WTC11 (cell line): ENCODE measurements at regions of chr9 and their contacts with region 1.

Region 1: DNA sequence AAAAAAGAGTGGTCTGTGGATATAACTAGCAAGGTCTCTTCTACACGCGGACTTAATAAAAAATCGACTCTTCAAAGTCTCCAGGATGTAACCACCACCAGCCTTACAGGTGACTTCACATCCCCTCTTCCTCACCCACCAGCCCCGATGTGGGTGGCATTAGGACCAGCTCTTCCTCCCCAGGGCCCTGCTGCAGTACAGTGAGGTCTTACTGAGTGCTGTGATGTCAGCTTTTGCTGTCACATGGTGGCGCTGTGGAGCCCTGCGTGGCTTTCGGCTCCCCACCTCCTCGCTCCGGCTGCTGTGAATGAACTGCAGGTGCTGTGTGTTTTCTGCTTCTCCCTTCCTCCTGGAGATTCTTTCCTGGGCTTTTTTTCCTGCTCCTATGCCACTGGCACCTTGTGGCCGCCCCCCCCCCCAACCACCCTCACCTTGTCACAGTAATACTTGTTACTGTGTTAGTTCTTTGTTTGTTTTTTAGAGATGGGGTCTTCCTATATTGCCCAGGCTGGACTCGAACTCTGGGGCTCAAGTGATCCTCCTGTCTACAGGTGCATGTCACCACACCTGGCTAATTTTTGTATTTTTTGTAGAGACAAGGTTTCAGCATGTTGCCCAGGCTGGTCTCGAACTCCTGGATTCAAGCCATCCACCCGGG is 15.8 kb upstream of the RAPGEF1 start:
- DNase-seq: peak; percentile 92
- ATAC-seq: peak; percentile 93
- H3K4me3 Mint-ChIP-seq: no peak overlapping the region
- H3K27ac Mint-ChIP-seq: peak overlapping the region; percentile 98
- H3K4me1 Mint-ChIP-seq: peaks cover 11% of the 10 kb centered on the region
- H3K27me3 Mint-ChIP-seq: peaks cover 2% of the 10 kb centered on the region; the same call in 1 of the 2 replicates
- CTCF ChIP-seq: peak; percentile 80

Region 2: DNA sequence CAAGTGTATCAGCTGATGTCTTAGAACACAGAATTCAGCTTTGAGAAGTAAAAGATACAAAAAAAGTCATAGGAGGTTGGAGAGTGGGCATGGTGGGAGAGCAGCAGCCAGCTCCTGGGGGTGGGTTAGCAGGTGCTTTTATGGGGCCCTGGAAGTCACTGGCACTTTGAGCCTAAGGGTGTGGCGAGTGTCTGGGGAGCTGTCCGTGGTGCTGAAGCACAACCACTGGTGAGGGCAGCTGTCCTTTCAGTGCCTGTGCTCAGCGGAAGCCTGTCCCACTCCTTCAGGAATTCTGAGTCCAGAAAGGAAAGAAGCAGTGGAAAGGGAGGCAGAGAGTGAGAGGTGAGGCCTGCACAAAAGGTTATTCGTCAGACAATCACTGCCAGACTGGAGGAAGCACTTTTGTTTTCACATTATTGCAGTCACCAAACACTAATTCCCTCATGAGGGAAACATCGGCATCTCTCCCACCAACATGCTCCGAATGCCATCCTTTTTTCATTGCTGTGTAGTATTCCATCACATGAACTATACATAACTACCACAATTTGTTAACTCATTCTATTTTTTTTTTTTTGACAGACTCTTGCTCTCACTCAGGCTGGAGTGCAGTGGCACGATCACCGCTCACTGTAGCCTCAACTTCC is 43.6 kb after region 1 on chr9:
- CTCF ChIA-PET with region 1: no interaction called
- POLR2A ChIA-PET with region 1: interaction called, 10 read pairs
- DNase-seq: peak; percentile 82
- ATAC-seq: peak; percentile 78
- H3K4me3 Mint-ChIP-seq: no peak overlapping the region
- H3K27ac Mint-ChIP-seq: no peak overlapping the region
- H3K4me1 Mint-ChIP-seq: peaks cover 11% of the 10 kb centered on the region
- H3K27me3 Mint-ChIP-seq: no peaks in the 10 kb centered on the region
- CTCF ChIP-seq: no peak

Region 3: DNA sequence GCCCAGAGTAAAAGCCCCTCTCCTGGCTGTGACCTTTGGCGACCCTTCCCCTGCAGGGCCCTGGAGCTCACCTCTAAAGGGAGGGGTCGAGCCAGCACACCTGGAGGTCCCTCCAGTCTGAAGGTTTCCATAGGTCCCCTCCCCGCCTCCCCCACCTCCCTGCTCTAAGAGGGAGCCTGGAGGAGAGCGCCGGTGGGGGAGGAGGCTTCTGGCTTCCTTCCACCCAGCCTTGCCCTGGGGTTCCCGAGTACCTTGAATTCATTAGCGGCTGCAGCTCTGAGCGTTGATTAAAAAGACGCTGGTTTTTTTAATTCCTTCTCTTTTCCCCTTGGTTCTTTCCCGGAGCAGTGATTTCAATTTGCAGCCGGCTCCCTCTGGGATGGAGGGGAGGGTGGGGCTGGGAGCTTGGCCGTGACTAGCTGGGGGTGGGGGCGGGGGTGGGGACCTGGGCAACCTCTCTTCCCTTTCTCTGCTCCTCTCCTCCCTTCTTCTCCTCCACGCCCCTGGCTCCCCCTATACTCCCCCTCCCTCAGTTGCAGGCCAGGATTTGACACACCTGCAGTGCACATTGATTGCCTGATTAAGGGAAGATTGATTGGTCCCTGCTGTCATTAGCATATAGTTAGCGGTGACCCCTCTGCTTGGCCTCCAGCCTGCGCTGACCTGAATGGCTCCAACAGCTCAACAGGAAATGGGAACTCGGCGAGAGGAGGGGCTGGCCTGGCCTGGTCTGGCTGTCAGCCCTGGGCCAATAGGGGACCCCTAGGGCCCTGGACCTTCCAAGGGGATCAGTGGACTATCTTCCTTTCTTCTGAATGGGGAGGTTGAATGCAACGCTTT is 51.7 kb after region 1 on chr9:
- CTCF ChIA-PET with region 1: interaction called, 11 read pairs
- POLR2A ChIA-PET with region 1: interaction called, 10 read pairs
- DNase-seq: peak; percentile 73
- ATAC-seq: peak; percentile 91
- H3K4me3 Mint-ChIP-seq: peak overlapping the region; percentile 75
- H3K27ac Mint-ChIP-seq: peak overlapping the region; percentile 84
- H3K4me1 Mint-ChIP-seq: peaks cover 52% of the 10 kb centered on the region
- H3K27me3 Mint-ChIP-seq: no peaks in the 10 kb centered on the region
- CTCF ChIP-seq: no peak

Region 4: DNA sequence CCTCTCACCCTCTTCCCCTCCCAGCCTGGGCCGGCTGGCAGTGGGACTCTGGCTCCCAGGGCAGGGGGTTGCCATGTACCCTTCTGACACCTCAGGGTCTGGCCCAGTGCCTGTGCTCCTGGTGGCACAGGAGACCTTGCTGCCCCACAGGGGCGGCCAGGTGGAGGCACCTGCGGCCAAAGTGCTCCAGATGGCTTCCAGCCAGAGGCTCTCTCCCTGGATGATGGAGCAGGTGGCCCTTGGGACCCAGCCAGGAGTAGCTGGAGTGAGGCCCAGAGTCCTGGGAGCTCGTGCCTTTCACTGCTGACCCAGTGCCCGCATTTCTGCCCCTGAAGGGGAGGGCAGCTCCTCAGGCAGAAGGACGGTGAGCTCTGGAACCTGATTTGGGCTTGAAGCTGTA is 493.5 kb after region 1 on chr9:
- CTCF ChIA-PET with region 1: interaction called, 12 read pairs
- POLR2A ChIA-PET with region 1: no interaction called
- DNase-seq: no peak
- ATAC-seq: no peak
- H3K4me3 Mint-ChIP-seq: no peak overlapping the region
- H3K27ac Mint-ChIP-seq: no peak overlapping the region
- H3K4me1 Mint-ChIP-seq: peaks cover 13% of the 10 kb centered on the region
- H3K27me3 Mint-ChIP-seq: peaks cover 20% of the 10 kb centered on the region
- CTCF ChIP-seq: no peak